Heart left ventricle (tissue), 16 donors: ENCODE measurements at regions of chr3 and their contacts with region 1.

Region 1: DNA sequence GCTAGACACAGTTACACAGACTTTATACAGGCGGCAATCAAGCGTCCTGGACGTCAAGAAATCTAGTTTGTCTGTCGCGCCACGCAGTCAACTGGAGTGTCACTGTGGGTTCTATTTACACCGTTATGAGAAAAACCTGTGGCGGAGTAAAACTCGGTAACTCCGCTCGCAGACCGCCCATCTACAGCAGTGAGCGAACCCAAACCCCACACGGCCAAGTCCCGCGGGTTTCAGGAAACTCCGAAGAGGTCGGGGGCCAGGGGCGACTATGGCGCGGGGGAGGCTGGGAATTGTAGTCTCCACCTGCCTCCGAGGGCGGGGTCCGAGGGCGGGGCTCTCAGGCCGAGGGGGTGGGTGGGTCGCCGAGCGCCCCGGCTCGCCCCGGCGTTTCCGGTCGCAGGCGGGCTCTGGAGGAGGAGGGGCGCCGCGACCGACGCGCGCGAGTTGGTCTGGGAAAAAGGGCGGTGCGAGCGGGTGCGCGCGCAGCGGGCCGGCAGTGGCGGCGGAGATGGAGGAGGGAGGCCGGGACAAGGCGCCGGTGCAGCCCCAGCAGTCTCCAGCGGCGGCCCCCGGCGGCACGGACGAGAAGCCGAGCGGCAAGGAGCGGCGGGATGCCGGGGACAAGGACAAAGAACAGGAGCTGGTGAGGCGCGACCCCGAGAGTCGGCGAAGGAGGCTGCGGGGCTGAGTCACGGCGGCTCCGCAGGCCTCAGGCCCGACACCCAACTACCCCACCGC is at the start of gene PSMD2:
- DNase-seq: peak; percentile 97 to 99 (median 98)
- ATAC-seq: peak; percentile 99 to 100 (median 99)
- H3K4me3 ChIP-seq: peak within 1 kb of the TSS; percentile 66 to 98 (median 92)
- H3K27ac ChIP-seq: peak within 1 kb of the TSS; percentile 30 to 90 (median 84)
- H3K4me1 ChIP-seq: peaks cover 0 to 19% (median 13%) of the 10 kb centered on the region in 12 donors
- H3K27me3 ChIP-seq: no peaks in the 10 kb centered on the region
- CTCF ChIP-seq: no peak
- POLR2A ChIP-seq: peak; percentile 25 to 76
- total RNA-seq, gene PSMD2: 198 to 314 (median 232) TPM

Region 2: DNA sequence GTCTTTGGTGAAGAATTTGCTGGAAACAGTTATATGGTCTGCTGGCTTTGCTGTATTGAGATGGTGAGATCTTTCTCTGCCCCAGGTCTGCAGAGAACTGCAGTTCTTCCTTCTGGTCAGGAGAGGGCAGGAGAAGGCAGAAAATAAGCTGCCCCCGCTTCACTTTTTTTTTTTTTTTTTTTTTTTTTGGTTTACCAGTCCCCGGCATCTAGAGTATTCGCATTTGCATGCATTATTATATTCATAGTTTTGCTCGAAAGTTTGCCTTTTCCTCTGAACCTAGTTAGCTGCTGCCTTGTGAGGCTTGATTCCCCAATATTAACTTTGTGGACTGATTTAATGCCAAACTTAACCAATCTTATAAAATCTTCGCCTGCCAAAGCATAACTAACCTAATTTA is 403.6 kb before region 1 on chr3:
- intact Hi-C with region 1: loop called in 3 of 10 experiments (anchors 5 to 10 kb)
- DNase-seq: no peak
- ATAC-seq: peak in 3 of 4 donors; percentile 62 to 68 (median 64)
- H3K4me3 ChIP-seq: no peak overlapping the region
- H3K27ac ChIP-seq: no peak overlapping the region
- H3K4me1 ChIP-seq: no peaks in the 10 kb centered on the region
- H3K27me3 ChIP-seq: peaks cover 0 to 6% (median 0%) of the 10 kb centered on the region in 9 donors
- CTCF ChIP-seq: peak; percentile 64 to 83 (median 78)
- POLR2A ChIP-seq: no peak

Region 3: GRCh38 chr3:184174646-184175492 is 124.1 kb before region 1 on chr3 and contains the start of gene AP2M1:
- intact Hi-C with region 1: loop called in 2 of 10 experiments (anchors 5 to 10 kb)
- DNase-seq: peak; percentile 98 to 99 (median 98)
- ATAC-seq: peak; percentile 91 to 97 (median 95)
- H3K4me3 ChIP-seq: peak within 1 kb of the TSS; percentile 64 to 100 (median 97)
- H3K27ac ChIP-seq: peak within 1 kb of the TSS; percentile 90 to 99 (median 96)
- H3K4me1 ChIP-seq: peaks cover 0 to 54% (median 33%) of the 10 kb centered on the region in 12 donors
- H3K27me3 ChIP-seq: no peaks in the 10 kb centered on the region
- CTCF ChIP-seq: peak in 1 of 12 donors; percentile 5
- POLR2A ChIP-seq: peak; percentile 40 to 93
- total RNA-seq, gene AP2M1: 225 to 400 (median 337) TPM

Region 4: DNA sequence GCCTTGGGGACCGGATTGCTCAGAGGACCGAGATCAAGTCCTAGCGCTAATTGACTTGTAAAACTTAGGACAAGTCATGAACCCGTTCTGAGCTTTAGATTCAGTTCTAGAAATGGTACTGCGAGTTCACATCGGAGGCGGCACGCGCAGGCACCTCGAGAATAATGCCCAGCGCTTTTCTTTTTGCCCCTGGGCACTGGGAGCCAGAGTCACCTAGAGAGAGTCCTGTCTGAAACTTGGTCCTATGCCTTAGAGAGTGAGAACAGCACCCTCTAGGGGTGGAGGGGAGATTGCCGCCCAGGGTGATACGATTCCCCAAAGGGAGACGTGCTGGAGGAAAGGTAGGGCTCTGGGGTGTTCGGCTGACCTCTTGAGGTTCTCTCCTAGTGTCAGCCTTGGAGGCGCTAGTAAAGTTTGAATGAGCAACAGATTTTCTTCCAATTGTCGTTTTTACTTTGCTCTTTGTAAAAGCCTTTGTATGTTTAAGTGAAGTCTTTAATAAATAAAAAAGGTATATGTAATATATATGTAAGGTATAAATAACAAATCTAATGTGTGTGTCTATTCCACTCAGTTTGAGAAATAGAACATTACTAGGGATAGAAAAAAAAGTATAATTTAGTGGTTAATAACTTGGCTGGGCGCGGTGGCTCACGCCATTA is 48.6 kb before region 1 on chr3:
- intact Hi-C with region 1: loop called in 2 of 10 experiments (anchors 2 to 5 kb)
- DNase-seq: peak; percentile 73 to 88 (median 85)
- ATAC-seq: peak; percentile 70 to 84 (median 82)
- H3K4me3 ChIP-seq: peak overlapping the region; percentile 47 to 99 (median 82)
- H3K27ac ChIP-seq: peak overlapping the region in 11 of 12 donors; percentile 25 to 96 (median 76)
- H3K4me1 ChIP-seq: peaks cover 0 to 22% (median 11%) of the 10 kb centered on the region in 12 donors
- H3K27me3 ChIP-seq: no peaks in the 10 kb centered on the region
- CTCF ChIP-seq: peak; percentile 82 to 98 (median 94)
- POLR2A ChIP-seq: no peak

Region 5: DNA sequence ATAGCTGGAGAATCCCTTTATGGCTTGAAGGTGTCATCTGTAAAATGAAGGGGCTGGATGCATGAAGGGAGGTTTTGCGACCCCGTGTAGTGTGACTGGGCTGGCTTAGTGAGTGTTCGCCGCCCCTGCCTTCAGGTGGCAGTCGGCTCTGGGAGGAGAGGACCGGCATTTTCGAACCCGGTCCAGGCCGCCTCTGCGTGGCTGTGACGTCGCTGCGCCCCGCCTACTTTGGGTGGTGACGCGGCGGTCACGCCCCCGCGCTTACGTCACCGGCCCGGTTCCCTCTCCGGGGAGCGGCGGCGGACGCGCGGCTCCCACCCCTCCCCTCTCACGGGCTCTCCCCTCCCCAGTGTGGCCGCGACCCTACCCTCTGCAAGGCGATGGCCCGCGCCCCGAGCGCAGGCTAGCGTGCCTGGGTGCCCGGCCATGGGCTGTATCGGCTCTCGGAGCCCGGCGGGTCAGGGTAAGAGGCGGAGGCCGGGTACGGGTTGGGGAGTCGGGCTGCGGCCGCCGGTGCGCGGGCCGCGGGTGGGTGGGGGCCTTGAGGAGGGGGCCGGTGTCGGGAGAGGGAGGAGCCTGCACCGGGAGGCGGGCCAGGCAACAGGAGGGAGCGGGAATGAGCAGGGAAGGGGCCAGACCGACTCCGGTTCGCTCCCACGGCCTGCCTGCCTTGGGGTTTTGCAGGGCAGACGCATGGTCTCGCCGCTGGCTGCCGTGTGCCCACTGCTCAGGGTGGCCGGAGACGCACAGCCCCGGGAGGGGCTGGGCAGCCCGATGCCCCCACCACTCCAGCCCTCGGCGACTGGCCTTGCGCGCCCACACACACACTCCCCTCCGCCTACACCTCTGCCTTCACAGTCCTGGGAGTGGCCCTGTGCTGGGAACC is 37.0 kb after region 1 on chr3:
- intact Hi-C with region 1: loop called in 1 of 10 experiments (anchors 2 kb)
- DNase-seq: peak; percentile 87 to 93 (median 91)
- ATAC-seq: peak; percentile 17 to 66 (median 64)
- H3K4me3 ChIP-seq: peak overlapping the region; percentile 66 to 95 (median 86)
- H3K27ac ChIP-seq: peak overlapping the region; percentile 75 to 100 (median 96)
- H3K4me1 ChIP-seq: peaks cover 11 to 54% (median 37%) of the 10 kb centered on the region in 12 donors
- H3K27me3 ChIP-seq: no peaks in the 10 kb centered on the region
- CTCF ChIP-seq: no peak
- POLR2A ChIP-seq: peak; percentile 85

Region 6: DNA sequence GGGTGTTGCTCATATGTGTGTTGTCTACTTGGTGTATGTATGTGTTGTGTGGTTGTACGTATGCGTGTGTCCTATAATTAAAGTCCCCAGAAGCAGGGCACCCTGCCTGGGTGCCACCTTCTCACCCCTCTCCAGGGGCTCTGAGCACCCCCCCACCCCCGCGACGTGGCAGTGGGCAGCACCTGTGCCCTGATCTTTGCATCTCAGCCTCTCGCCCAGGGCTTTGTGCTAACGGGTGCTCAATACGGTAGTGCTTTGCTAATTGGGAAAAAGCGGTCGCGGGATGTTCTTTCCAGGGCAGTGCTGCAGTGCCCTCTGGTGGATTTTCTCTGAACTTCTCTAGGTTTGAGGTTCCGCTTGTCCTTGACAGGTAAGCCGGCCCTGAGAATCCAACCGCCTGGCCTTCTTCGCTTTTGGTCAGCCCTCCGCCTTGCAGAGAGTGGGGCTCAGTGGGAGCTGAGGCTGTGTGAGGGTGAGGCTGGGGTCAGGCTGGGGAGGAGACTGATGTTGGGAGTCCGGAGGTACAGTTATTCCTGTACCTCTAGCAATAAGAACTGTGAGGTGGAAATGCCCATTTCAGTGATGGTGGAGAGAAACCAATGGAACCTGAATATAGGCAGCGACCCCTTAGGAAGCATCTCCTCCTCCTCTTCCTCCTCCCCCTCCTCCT is 245.1 kb after region 1 on chr3:
- intact Hi-C with region 1: loop called in 1 of 10 experiments (anchors 10 kb)
- DNase-seq: peak in 4 of 5 donors; percentile 50 to 73 (median 68)
- ATAC-seq: peak; percentile 35 to 81 (median 80)
- H3K4me3 ChIP-seq: no peak overlapping the region
- H3K27ac ChIP-seq: no peak overlapping the region
- H3K4me1 ChIP-seq: peaks cover 0 to 22% (median 3%) of the 10 kb centered on the region in 12 donors
- H3K27me3 ChIP-seq: peaks cover 0 to 32% (median 11%) of the 10 kb centered on the region in 9 donors
- CTCF ChIP-seq: peak; percentile 83 to 96 (median 92)
- POLR2A ChIP-seq: no peak